HEK293 (cell line): ENCODE measurements at regions of chr16 and their contacts with region 1.

Region 1: DNA sequence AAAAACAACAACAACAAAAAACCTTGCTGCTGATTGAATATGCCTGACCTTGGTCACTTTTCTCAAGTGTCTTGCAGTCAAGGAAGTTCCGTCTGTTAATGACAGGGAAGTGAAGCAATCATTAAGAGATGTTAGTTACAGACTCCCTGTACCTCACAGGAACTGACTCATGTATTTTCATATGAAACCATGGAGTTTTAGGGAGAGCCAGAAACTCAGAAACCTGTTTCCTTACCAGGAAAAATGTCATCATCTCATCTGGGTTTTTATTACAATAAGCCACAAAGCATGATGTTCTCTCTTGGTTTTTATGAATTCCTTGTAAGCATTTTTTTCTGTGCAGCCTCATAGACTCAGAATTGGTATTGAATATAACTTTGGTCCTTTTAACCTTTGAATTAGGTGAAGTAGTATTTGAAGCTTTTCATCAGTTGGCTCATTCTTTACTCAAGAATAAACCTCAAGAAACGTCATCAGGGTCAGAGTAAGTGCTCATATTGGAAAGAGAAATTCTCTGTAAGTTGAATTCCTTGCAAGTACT is 10.3 kb downstream of the LYRM1 start:
- H3K4me3 ChIP-seq: no peak overlapping the region
- H3K27ac ChIP-seq: no peak overlapping the region
- H3K4me1 ChIP-seq: no peaks in the 10 kb centered on the region
- CTCF ChIP-seq: no peak

Region 2: GRCh38 chr16:20900299-20901067 is 10.4 kb before region 1 on chr16 and contains the starts of genes DCUN1D3 and LYRM1:
- CTCF ChIA-PET with region 1: no interaction called
- POLR2A ChIA-PET with region 1: interaction called, 19 read pairs
- H3K4me3 ChIP-seq: peak within 1 kb of the TSS; percentile 83
- H3K27ac ChIP-seq: peak within 1 kb of the TSS; percentile 93
- H3K4me1 ChIP-seq: peaks cover 10% of the 10 kb centered on the region; the same call in 1 of the 2 replicates
- CTCF ChIP-seq: no peak